Activated B cell treated with CpG ODN at 0.5 μM for 24 hours (primary cell): ENCODE measurements at regions of chr3 and their contacts with region 1.

Region 1: GRCh38 chr3:50611464-50612233 is at the start of gene CISH:
- DNase-seq: peak; percentile 92
- ATAC-seq: peak; percentile 77
- H3K4me3 Mint-ChIP-seq: peak within 1 kb of the TSS; percentile 87
- H3K27ac Mint-ChIP-seq: peak within 1 kb of the TSS; percentile 77
- H3K4me1 Mint-ChIP-seq: peaks cover 38% of the 10 kb centered on the region
- H3K27me3 Mint-ChIP-seq: no peaks in the 10 kb centered on the region
- CTCF ChIP-seq: no peak
- total RNA-seq, gene CISH: 2.9 and 3.2 TPM in 2 replicates

Region 2: DNA sequence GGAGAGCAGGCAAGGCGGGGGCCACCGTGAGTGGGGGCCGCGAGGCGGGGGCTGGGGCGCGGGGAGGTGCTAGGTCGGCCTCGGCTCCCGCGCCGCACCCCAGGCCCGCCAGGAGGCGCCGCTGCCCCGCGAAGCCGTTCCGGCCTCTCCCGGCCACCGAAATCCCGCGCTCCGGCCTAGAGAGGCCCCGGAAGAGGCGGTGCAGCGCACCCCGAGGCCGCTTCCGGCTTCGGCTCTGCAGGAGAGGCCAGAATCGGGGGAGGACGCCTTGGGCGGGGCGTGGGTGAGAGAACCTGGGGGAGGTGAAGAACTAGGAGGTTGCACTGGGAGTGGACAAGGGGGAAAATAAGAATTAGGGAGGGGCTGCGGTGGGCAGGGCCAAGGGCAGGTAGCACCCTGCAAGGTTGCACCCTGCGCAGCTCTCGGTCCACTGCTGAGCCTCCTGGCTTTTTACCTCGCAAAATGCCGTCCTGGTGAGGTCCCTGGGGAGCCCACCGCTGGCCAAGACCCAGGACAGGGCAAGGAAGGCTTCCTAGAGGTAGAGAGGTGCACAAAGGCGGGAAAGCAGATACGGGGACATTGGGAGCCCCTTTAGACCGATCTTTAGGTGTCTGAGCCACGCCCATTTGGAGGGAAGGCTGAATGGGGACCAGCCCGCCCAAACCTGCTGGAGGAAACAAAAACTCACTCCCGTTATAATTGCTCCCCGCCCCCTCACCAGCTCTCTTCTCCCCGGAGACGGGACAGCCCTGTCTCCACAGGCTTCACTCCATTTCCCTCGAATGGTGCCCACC is 384.1 kb before region 1 on chr3:
- CTCF ChIA-PET with region 1: no interaction called
- POLR2A ChIA-PET with region 1: interaction called, 3 read pairs
- intact Hi-C with region 1: loop called (anchors 10 kb)
- DNase-seq: peak; percentile 93
- ATAC-seq: peak; percentile 81
- H3K4me3 Mint-ChIP-seq: peak overlapping the region; percentile 94
- H3K27ac Mint-ChIP-seq: peak overlapping the region; percentile 88
- H3K4me1 Mint-ChIP-seq: peaks cover 40% of the 10 kb centered on the region
- H3K27me3 Mint-ChIP-seq: peaks cover 5% of the 10 kb centered on the region
- CTCF ChIP-seq: peak; percentile 92

Region 3: DNA sequence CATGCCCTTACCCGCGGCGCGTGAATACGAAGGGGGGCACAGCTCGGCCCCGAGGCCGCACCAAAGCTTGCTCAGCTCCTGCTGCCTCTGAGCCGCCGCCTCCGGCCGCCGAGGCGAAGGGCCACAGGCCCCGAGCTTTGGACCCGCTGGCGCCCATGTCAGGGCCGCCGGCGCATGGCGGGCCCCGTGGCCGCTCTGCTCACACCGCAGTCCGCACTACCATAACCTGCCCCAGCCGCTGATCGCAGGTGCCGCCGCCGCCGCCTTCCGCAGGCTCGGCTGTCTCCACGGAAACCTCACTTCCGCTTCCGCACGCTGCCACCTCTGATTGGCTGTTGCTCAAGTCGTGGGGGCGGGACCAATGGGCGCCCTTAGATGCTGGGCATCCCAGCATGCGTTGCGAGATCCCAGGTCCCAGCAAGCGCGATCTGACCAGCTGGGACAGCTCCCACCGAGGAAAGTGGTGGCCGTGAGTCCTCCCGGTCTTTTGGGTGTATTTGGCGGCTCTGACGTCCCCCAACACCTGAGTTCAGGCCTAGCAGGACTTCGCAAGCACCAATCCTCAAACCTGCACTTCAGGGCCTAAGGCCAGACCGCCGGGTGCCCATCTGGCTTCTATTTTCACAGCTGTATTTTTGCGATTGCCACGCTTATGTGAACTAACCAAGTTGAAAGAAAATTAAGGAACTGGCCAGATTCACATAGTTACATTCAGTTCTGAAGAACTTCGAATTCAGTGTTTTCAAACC is 283.5 kb before region 1 on chr3 and contains the start of gene TUSC2:
- CTCF ChIA-PET with region 1: no interaction called
- POLR2A ChIA-PET with region 1: no interaction called
- intact Hi-C with region 1: no loop called
- DNase-seq: peak; percentile 91
- ATAC-seq: peak; percentile 96
- H3K4me3 Mint-ChIP-seq: peak within 1 kb of the TSS; percentile 92
- H3K27ac Mint-ChIP-seq: peak within 1 kb of the TSS; percentile 84
- H3K4me1 Mint-ChIP-seq: peaks cover 25% of the 10 kb centered on the region
- H3K27me3 Mint-ChIP-seq: no peaks in the 10 kb centered on the region
- CTCF ChIP-seq: no peak
- total RNA-seq, gene TUSC2: 32.2 and 33.4 TPM in 2 replicates

Region 4: DNA sequence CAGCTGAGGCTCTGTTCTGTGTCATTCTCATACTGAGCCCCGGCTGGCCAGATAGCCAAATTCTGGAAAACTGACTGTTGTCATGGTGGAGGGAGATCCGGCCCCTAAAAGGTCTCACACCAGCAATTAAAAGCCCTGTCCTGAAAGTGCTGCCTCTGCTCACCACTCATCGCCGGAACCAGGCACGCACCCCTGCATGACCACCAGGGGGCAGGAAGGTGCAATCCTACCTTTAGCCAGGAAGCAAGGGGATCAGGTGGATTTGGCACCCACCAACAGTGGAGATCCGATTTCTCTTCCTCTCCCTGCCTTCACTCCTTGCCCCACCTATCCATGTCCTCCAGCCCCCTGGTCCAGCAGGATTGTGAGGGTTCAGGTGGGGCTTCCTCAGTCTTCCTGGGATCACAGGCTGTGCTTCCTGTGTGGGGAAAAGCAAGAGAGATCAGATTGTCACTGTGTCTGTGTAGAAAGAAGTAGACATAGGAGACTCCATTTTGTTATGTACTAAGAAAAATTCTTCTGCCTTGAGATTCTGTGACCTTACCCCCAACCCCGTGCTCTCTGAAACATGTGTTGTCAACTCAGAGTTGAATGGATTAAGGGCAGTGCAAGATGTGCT is 92.1 kb before region 1 on chr3:
- CTCF ChIA-PET with region 1: interaction called, 7 read pairs
- POLR2A ChIA-PET with region 1: interaction called, 3 read pairs
- intact Hi-C with region 1: loop called (anchors 1 kb)
- DNase-seq: peak; percentile 52
- ATAC-seq: peak; percentile 38
- H3K4me3 Mint-ChIP-seq: no peak overlapping the region
- H3K27ac Mint-ChIP-seq: no peak overlapping the region
- H3K4me1 Mint-ChIP-seq: peaks cover 27% of the 10 kb centered on the region
- H3K27me3 Mint-ChIP-seq: peaks cover 3% of the 10 kb centered on the region
- CTCF ChIP-seq: no peak

Region 5: GRCh38 chr3:50632450-50632849 is 20.8 kb after region 1 on chr3:
- CTCF ChIA-PET with region 1: interaction called, 10 read pairs
- POLR2A ChIA-PET with region 1: interaction called, 3 read pairs
- intact Hi-C with region 1: no loop called
- DNase-seq: no peak
- ATAC-seq: no peak
- H3K4me3 Mint-ChIP-seq: no peak overlapping the region
- H3K27ac Mint-ChIP-seq: no peak overlapping the region
- H3K4me1 Mint-ChIP-seq: peaks cover 31% of the 10 kb centered on the region
- H3K27me3 Mint-ChIP-seq: no peaks in the 10 kb centered on the region
- CTCF ChIP-seq: no peak

Region 6: DNA sequence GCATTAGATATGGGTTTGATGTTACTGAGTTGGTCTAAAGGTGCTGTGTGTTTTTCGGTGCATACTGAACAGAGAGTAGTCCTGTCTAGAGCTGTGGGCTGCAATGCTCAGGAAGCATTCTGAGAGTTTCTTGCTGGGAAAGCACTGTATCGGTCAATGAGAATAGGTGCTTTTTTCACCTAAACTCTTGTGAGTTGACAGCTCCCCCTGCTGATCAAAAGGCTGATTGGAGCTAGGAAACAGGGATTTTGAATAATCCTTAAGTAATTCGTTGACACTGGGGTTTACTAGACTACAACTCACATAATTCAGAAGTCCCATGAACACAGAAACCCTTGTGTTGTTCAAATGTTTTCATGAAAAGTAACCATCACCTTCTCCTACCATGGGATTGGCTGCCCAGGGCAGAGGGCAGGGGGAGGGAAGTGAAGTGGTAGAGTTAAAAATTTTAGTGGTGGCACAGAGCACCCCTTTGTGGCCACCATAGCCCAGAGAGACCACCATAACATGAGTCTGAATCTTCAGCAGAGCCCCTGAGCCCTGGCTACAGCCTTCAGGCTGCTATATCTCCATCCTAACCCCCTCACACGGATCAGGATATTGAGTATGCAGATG is 760.4 kb after region 1 on chr3:
- CTCF ChIA-PET with region 1: interaction called, 54 read pairs
- POLR2A ChIA-PET with region 1: no interaction called
- intact Hi-C with region 1: no loop called
- DNase-seq: no peak
- ATAC-seq: no peak
- H3K4me3 Mint-ChIP-seq: no peak overlapping the region
- H3K27ac Mint-ChIP-seq: no peak overlapping the region
- H3K4me1 Mint-ChIP-seq: no peaks in the 10 kb centered on the region
- H3K27me3 Mint-ChIP-seq: peaks cover 46% of the 10 kb centered on the region
- CTCF ChIP-seq: no peak

Region 7: GRCh38 chr3:51498876-51499738 is 887.5 kb after region 1 on chr3:
- CTCF ChIA-PET with region 1: interaction called, 5 read pairs
- POLR2A ChIA-PET with region 1: interaction called, 8 read pairs
- intact Hi-C with region 1: loop called (anchors 1 kb)
- DNase-seq: peak; percentile 77
- ATAC-seq: peak; percentile 40
- H3K4me3 Mint-ChIP-seq: peak overlapping the region; percentile 89
- H3K27ac Mint-ChIP-seq: peak overlapping the region; percentile 95
- H3K4me1 Mint-ChIP-seq: peaks cover 22% of the 10 kb centered on the region
- H3K27me3 Mint-ChIP-seq: no peaks in the 10 kb centered on the region
- CTCF ChIP-seq: no peak

Region 8: GRCh38 chr3:51974963-51975851 is 1363.6 kb after region 1 on chr3 and contains the start of gene ABHD14A:
- CTCF ChIA-PET with region 1: no interaction called
- POLR2A ChIA-PET with region 1: no interaction called
- intact Hi-C with region 1: loop called (anchors 10 kb)
- DNase-seq: peak; percentile 74
- ATAC-seq: peak; percentile 76
- H3K4me3 Mint-ChIP-seq: peak within 1 kb of the TSS; percentile 98
- H3K27ac Mint-ChIP-seq: peak within 1 kb of the TSS; percentile 91
- H3K4me1 Mint-ChIP-seq: peaks cover 28% of the 10 kb centered on the region
- H3K27me3 Mint-ChIP-seq: no peaks in the 10 kb centered on the region
- CTCF ChIP-seq: no peak
- total RNA-seq, gene ABHD14A: 5.1 and 5.2 TPM in 2 replicates